H1 (cell line): ENCODE measurements at regions of chr16 and their contacts with region 1.

Region 1: GRCh38 chr16:22346483-22346882 is 27.9 kb downstream of the CDR2 start:
- DNase-seq: no peak
- H3K4me3 ChIP-seq: no peak overlapping the region
- H3K27ac ChIP-seq: no peak overlapping the region
- H3K4me1 ChIP-seq: no peaks in the 10 kb centered on the region
- H3K27me3 ChIP-seq: no peaks in the 10 kb centered on the region
- CTCF ChIP-seq: no peak
- EP300 ChIP-seq: no peak
- POLR2A ChIP-seq: no peak
- RAD21 ChIP-seq: no peak

Region 2: GRCh38 chr16:22307838-22308237 is 38.6 kb before region 1 on chr16:
- CTCF ChIA-PET with region 1: no interaction called
- POLR2A ChIA-PET with region 1: no interaction called
- DNase-seq: no peak
- H3K4me3 ChIP-seq: no peak overlapping the region
- H3K27ac ChIP-seq: no peak overlapping the region
- H3K4me1 ChIP-seq: no peaks in the 10 kb centered on the region
- H3K27me3 ChIP-seq: no peaks in the 10 kb centered on the region
- CTCF ChIP-seq: no peak
- EP300 ChIP-seq: no peak
- POLR2A ChIP-seq: no peak
- RAD21 ChIP-seq: no peak

Region 3: DNA sequence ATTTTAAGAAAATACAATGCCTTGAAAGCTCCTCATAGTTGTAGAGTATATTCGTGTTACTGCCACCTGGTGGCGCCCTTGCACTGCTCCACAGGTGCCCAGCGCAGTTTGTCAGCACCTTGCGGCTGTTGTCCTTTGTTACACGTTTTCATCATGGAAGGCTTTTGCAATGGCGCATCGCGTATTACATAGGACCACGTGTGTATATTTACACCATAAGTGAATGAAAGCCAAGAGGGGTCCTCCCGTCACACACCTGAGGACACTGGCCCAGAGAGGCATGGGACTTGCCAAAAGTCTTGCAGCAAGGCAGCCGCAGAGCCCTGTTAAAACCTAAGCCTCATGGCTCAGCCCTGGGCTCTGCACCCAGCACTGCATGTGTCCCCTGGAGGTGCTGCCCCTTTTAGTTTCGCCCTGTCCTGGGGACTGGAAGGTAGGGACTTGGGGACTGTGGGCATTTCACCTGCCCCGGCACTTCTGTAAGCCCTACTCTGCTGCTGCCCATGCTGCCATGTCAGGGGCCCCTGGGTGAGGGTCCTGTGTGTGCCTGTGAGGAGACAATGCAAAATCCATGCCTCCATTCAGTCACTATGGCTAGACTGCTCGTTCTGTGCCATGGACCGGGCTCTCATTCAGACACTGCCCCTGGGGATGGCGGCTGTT is 25.0 kb before region 1 on chr16:
- CTCF ChIA-PET with region 1: interaction called, 13 read pairs
- POLR2A ChIA-PET with region 1: interaction called, 4 read pairs
- DNase-seq: peak in 1 of 2 experiments; percentile 80
- H3K4me3 ChIP-seq: no peak overlapping the region
- H3K27ac ChIP-seq: peak overlapping the region; percentile 62
- H3K4me1 ChIP-seq: peaks cover 0 to 3% (median under 1%) of the 10 kb centered on the region in 4 experiments; a peak in 2 of 7 replicates
- H3K27me3 ChIP-seq: no peaks in the 10 kb centered on the region
- CTCF ChIP-seq: peak; percentile 86 to 97 (median 91)
- EP300 ChIP-seq: no peak
- POLR2A ChIP-seq: no peak
- RAD21 ChIP-seq: peak; percentile 90 to 95

Region 4: GRCh38 chr16:22386976-22387375 is 40.5 kb after region 1 on chr16:
- CTCF ChIA-PET with region 1: no interaction called
- POLR2A ChIA-PET with region 1: no interaction called
- DNase-seq: no peak
- H3K4me3 ChIP-seq: no peak overlapping the region
- H3K27ac ChIP-seq: no peak overlapping the region
- H3K4me1 ChIP-seq: no peaks in the 10 kb centered on the region
- H3K27me3 ChIP-seq: no peaks in the 10 kb centered on the region
- CTCF ChIP-seq: no peak
- EP300 ChIP-seq: no peak
- POLR2A ChIP-seq: no peak
- RAD21 ChIP-seq: no peak